Activated CD8-positive, alpha-beta T cell treated with anti-CD3 and anti-CD28 coated beads for 36 hours (primary cell): ENCODE measurements at regions of chr17 and their contacts with region 1.

Region 1: DNA sequence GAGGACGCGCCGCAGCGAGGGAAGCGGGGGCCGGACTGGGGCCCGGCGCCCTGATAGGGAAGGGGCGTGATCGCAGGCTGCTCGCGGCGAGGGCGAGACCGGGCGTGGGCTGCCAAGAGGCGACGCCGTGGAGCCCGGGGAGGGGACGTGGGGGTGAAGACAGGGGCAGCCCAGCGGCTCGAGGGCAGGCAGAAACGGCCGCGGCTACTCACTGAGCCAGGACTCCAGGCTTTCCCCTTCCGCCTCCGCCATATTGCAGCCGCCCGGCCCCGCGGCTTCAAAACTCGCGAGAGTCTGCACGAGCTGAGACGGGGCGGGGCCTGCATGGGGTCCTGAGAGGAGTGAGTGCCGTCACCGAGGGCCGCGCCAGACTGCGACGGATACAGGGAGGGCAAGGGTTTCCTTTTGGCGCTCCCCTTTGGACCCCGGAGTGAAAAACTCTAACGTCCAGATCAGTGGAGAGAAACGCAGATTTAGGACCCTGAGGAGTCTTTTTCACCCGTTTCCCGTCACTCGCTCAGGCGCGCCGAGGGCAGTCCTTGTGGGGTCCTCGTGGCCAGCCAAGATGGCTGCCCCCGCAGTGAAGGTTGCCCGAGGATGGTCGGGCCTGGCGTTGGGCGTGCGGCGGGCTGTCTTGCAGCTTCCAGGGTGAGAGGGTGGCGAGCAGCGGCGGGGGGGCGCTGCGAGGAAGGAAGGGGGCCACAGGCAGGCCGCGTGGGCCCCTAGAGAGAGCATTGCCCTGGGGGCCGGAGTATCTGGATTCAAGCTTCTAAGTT is at the starts of genes GGA3 and MRPS7:
- DNase-seq: peak; percentile 97
- ATAC-seq: peak; percentile 96
- H3K4me3 Mint-ChIP-seq: peak within 1 kb of the TSS; percentile 95
- H3K27ac Mint-ChIP-seq: peak within 1 kb of the TSS; percentile 99
- H3K4me1 Mint-ChIP-seq: peaks cover 52% of the 10 kb centered on the region
- H3K27me3 Mint-ChIP-seq: no peaks in the 10 kb centered on the region
- CTCF ChIP-seq: no peak
- total RNA-seq, gene GGA3: 65.5 to 65.8 TPM
- total RNA-seq, gene MRPS7: 76.3 to 80.0 TPM

Region 2: GRCh38 chr17:75096082-75096625 is 165.4 kb before region 1 on chr17:
- CTCF ChIA-PET with region 1: no interaction called
- POLR2A ChIA-PET with region 1: no interaction called
- intact Hi-C with region 1: no loop called
- DNase-seq: no peak
- ATAC-seq: no peak
- H3K4me3 Mint-ChIP-seq: no peak overlapping the region
- H3K27ac Mint-ChIP-seq: no peak overlapping the region
- H3K4me1 Mint-ChIP-seq: no peaks in the 10 kb centered on the region
- H3K27me3 Mint-ChIP-seq: no peaks in the 10 kb centered on the region
- CTCF ChIP-seq: no peak

Region 3: DNA sequence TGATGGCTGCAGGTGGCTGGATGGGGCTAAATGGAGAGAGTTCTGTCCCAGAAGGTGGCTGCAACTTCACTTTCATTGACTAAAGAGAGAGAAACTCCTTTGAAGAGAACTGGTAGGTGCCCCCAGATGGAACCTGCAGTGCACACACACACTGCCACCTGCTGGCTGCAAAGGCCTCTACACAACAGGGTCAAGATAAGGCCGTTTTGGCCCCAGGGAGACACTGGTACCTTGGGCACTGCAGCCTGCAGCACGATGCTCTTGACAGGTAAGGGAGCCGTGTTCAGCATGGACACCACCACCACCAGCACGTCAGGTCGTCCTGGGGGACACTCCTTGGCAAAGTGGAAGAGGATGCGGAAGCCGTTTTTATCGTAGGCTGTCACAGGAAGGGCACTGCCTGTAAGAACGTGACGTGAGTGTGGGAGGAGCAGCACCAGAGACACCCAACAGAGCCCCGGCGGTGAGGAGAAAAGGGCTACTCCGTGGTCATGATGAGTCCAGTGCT is 22.8 kb before region 1 on chr17:
- CTCF ChIA-PET with region 1: interaction called, 59 read pairs
- POLR2A ChIA-PET with region 1: interaction called, 50 read pairs
- intact Hi-C with region 1: no loop called
- DNase-seq: peak; percentile 73
- ATAC-seq: peak; percentile 66
- H3K4me3 Mint-ChIP-seq: no peak overlapping the region
- H3K27ac Mint-ChIP-seq: peak overlapping the region; percentile 76
- H3K4me1 Mint-ChIP-seq: peaks cover 36% of the 10 kb centered on the region
- H3K27me3 Mint-ChIP-seq: no peaks in the 10 kb centered on the region
- CTCF ChIP-seq: peak; percentile 73

Region 4: GRCh38 chr17:75250009-75250471 is 11.5 kb before region 1 on chr17:
- CTCF ChIA-PET with region 1: interaction called, 30 read pairs
- POLR2A ChIA-PET with region 1: interaction called, 59 read pairs
- intact Hi-C with region 1: no loop called
- DNase-seq: peak; percentile 92
- ATAC-seq: peak; percentile 97
- H3K4me3 Mint-ChIP-seq: peak overlapping the region; percentile 64
- H3K27ac Mint-ChIP-seq: peak overlapping the region; percentile 93
- H3K4me1 Mint-ChIP-seq: peaks cover 67% of the 10 kb centered on the region
- H3K27me3 Mint-ChIP-seq: no peaks in the 10 kb centered on the region
- CTCF ChIP-seq: no peak

Region 5: DNA sequence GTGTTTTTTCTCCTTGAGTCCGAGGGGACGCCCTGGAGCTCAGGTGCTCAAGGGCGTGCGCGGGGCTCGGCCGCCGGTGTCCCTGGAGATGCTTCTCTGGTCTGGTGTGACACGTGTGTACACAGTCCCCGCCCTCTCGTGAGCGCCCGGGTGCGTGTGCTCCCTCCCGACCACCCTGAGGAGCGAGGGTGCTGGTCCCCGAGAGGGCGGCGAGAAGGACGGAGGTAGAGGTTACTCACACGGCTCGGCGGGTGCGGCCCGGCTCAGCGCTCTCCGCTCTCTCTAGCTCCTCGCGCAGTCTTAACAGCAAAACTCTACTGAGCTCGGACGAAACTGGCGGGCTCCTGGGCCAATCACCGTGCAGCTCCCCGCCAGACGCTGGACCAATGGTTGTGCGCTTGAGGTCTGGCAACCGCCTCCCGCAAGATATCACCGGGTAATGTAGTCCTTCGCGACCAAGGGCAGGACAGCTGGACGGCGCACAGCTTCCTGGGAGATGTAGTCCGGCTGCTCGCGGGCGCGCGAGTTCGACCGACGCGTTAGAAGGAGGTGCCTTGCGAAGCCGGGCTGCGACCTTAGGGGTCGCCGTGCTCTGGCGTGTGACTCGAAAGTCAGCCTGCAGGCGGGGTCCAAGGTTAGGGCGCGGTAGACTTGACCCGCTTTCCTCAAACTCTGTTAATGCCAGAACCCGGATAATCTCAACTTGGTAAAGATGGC is 27.7 kb after region 1 on chr17 and contains the start of gene SLC25A19:
- CTCF ChIA-PET with region 1: interaction called, 8 read pairs
- POLR2A ChIA-PET with region 1: interaction called, 25 read pairs
- intact Hi-C with region 1: no loop called
- DNase-seq: peak; percentile 99
- ATAC-seq: peak; percentile 93
- H3K4me3 Mint-ChIP-seq: peak within 1 kb of the TSS; percentile 89
- H3K27ac Mint-ChIP-seq: peak within 1 kb of the TSS; percentile 100
- H3K4me1 Mint-ChIP-seq: peaks cover 26% of the 10 kb centered on the region
- H3K27me3 Mint-ChIP-seq: no peaks in the 10 kb centered on the region
- CTCF ChIP-seq: no peak
- total RNA-seq, gene SLC25A19: 55.1 to 55.2 TPM

Region 6: GRCh38 chr17:75309025-75309772 is 47.7 kb after region 1 on chr17:
- CTCF ChIA-PET with region 1: no interaction called
- POLR2A ChIA-PET with region 1: interaction called, 11 read pairs
- intact Hi-C with region 1: no loop called
- DNase-seq: no peak
- ATAC-seq: no peak
- H3K4me3 Mint-ChIP-seq: no peak overlapping the region
- H3K27ac Mint-ChIP-seq: no peak overlapping the region
- H3K4me1 Mint-ChIP-seq: peaks cover 9% of the 10 kb centered on the region
- H3K27me3 Mint-ChIP-seq: no peaks in the 10 kb centered on the region
- CTCF ChIP-seq: no peak